Right ventricle myocardium inferior (tissue), 1 donor: ENCODE measurements at regions of chr21 and their contacts with region 1.

Region 1: GRCh38 chr21:44949779-44950198 is 10.0 kb downstream of the SLX9 start:
- DNase-seq: peak; percentile 94
- ATAC-seq: peak; percentile 67

Region 2: GRCh38 chr21:44911389-44912157 is 38.2 kb before region 1 on chr21:
- intact Hi-C with region 1: no loop called
- DNase-seq: peak; percentile 90
- ATAC-seq: peak; percentile 84

Region 3: GRCh38 chr21:45033791-45034555 is 84.2 kb after region 1 on chr21:
- intact Hi-C with region 1: loop called (anchors 5 kb)
- DNase-seq: no peak
- ATAC-seq: peak; percentile 60

Region 4: DNA sequence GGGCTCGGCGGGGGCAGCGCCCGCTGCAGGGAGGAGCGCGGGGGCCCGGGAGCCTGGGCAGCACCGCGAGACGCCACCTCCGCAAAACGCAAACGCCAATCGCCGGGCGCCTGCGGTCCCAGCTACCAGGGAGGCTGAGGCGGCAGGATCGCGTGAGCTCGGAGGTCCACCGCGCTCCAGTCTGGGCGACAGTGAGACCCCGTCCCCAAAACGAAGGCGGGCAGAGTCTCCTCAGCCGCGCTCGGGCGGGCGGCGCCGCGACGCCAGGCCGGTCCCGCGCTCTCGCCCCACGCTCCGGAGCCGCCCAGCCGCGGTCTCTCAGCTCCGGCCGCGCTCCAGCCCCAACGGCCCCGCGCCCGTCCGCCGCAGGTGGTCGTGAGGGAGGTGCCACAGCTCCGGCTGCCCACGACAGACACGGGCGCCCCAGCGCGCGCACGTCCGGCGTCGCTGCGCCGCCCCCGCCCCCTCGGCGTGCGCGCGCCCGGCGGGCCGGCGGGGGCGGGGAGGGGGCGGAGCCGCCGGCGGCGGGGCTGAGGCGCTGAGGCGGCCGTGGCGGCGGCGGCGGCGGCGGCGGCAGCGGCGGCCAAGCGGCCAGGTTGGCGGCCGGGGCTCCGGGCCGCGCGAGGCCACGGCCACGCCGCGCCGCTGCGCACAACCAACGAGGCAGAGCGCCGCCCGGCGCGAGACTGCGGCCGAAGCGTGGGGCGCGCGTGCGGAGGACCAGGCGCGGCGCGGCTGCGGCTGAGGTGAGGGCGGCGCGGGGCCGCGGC is 124.4 kb after region 1 on chr21 and contains the start of gene ADARB1:
- intact Hi-C with region 1: loop called (anchors 2 kb)
- DNase-seq: peak; percentile 85
- ATAC-seq: peak; percentile 71
- total RNA-seq, gene ADARB1: 15.1 TPM